PC-9 (cell line): ENCODE measurements at regions of chr4 and their contacts with region 1.

Region 1: GRCh38 chr4:185640811-185641675 is 105.7 kb upstream of the PDLIM3 start:
- DNase-seq: peak in 1 of 2 experiments; percentile 38
- H3K4me3 ChIP-seq: no peak overlapping the region
- H3K27ac ChIP-seq: no peak overlapping the region
- H3K4me1 ChIP-seq: no peaks in the 10 kb centered on the region
- H3K27me3 ChIP-seq: no peaks in the 10 kb centered on the region
- CTCF ChIP-seq: peak; percentile 67

Region 2: GRCh38 chr4:185656467-185656931 is 15.5 kb after region 1 on chr4:
- CTCF ChIA-PET with region 1: no interaction called
- POLR2A ChIA-PET with region 1: no interaction called
- intact Hi-C with region 1: no loop called
- DNase-seq: no peak
- H3K4me3 ChIP-seq: no peak overlapping the region
- H3K27ac ChIP-seq: no peak overlapping the region
- H3K4me1 ChIP-seq: no peaks in the 10 kb centered on the region
- H3K27me3 ChIP-seq: no peaks in the 10 kb centered on the region
- CTCF ChIP-seq: no peak

Region 3: GRCh38 chr4:185817403-185817818 is 176.4 kb after region 1 on chr4:
- CTCF ChIA-PET with region 1: no interaction called
- POLR2A ChIA-PET with region 1: no interaction called
- intact Hi-C with region 1: no loop called
- DNase-seq: peak in 1 of 2 experiments; percentile 28
- H3K4me3 ChIP-seq: no peak overlapping the region
- H3K27ac ChIP-seq: no peak overlapping the region
- H3K4me1 ChIP-seq: no peaks in the 10 kb centered on the region
- H3K27me3 ChIP-seq: no peaks in the 10 kb centered on the region
- CTCF ChIP-seq: no peak

Region 4: GRCh38 chr4:186021461-186022167 is 380.6 kb after region 1 on chr4:
- CTCF ChIA-PET with region 1: interaction called, 10 read pairs
- POLR2A ChIA-PET with region 1: no interaction called
- intact Hi-C with region 1: loop called (anchors 2 kb)
- DNase-seq: peak in 1 of 2 experiments; percentile 25
- H3K4me3 ChIP-seq: no peak overlapping the region
- H3K27ac ChIP-seq: no peak overlapping the region
- H3K4me1 ChIP-seq: no peaks in the 10 kb centered on the region
- H3K27me3 ChIP-seq: no peaks in the 10 kb centered on the region
- CTCF ChIP-seq: peak; percentile 58